ENCODE measurements at regions of chr11 and their contacts with region 1.

Region 1: DNA sequence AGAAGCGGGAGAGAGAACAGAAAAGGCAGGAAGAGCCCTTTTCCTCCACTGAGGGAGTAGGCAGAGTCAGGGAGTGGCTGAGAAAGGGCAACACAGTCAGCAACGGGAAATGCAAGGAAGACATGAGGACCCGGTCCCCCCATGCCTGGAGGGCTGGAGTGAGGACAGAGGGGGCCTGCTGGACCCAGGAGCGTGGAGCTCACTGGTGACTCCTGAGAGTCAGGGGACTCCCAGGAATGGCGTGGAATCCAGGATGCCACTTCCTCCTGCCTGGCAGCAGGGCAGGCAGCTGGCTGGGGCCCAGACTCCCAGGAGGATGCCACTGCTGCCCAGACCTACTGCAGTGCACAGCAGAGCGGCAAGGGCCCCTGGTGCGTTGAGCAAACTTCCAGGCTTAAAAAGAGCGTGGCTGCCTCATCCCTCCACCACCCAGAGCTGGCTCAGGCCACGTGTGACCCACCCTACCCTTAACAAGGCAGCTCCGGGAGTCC is 11.3 kb downstream of the C11orf21 start:
- DNase-seq: no peak
- ATAC-seq: peak in 3 of 8 donors; percentile 20 to 25 (median 24)
- H3K4me3 ChIP-seq: no peak overlapping the region
- H3K27ac ChIP-seq: peak overlapping the region in 4 of 10 donors; percentile 29 to 52 (median 38)
- H3K4me1 ChIP-seq: peaks cover 0 to 28% (median 7%) of the 10 kb centered on the region in 9 donors
- H3K27me3 ChIP-seq: peaks cover 0 to 6% (median 0%) of the 10 kb centered on the region in 7 donors
- CTCF ChIP-seq: no peak

Region 2: DNA sequence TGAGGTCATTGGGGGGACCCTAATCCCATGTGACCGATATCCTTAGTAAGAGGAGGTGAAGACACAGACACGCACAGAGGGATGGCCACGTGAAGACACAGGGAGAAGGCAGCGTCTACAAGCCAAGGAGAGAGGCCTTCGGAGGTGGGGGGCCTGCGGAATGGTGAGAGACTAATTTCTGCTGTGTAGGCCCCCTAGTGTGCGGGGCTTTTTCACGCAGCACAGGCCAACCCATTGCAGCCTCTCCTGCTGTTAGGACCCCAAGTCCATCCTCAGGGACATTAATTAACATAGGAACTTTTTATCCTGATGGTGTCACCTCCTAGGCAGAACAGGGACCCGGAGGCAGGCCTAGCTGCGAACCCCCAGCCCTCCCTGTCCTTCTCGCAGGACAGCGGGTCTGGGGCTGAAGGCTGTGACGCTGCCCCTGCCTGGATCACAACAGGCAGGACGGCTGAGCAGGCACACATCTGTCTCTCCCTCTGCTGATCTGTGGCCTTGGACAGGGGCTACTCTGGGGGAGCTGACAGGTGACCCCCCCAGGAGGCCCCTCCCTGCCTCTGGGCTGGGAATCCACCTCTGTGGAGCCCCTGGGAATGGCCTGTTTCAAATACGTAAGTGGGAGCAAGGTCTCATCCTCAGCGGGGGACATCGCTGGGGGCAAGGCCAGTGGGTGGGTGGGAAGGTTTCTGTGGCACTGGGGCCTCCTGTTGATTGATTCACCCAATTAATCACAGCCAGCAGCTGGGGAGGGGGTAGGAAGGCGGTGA is 27.9 kb before region 1 on chr11:
- intact Hi-C with region 1: loop called in 1 of 10 experiments (anchors 1 kb)
- DNase-seq: no peak
- ATAC-seq: no peak
- H3K4me3 ChIP-seq: no peak overlapping the region
- H3K27ac ChIP-seq: no peak overlapping the region
- H3K4me1 ChIP-seq: peaks cover 0 to 14% (median 0%) of the 10 kb centered on the region in 9 donors
- H3K27me3 ChIP-seq: peaks cover 0 to 37% (median 26%) of the 10 kb centered on the region in 7 donors
- CTCF ChIP-seq: no peak